ENCODE measurements at regions of chr17 and their contacts with region 1.

Region 1: DNA sequence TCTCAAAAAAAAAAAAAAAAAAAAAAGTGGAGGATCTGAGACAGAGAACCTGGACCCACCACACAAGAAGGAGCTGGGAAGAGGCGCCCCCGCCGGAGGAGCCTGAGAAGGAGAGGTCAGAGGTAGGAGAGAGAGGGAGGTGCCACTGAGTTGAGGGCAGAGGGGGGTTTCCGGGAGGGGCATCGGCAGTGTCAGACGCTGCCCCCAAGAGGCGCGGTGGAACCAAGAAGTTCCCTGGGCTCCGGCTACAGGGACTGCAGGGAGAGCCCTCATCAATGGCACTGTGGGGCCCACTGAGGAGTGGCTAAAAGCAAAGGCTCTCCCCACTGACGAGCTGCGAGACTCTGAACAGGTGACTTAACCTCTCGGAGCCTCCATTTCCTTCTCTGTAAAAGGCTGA is 4.2 kb downstream of the CCDC42 start:
- DNase-seq: peak; percentile 18
- H3K4me3 ChIP-seq: peak overlapping the region in 1 of 4 donors; percentile 19
- H3K27ac ChIP-seq: no peak overlapping the region
- H3K4me1 ChIP-seq: peaks cover 0 to 6% (median 3%) of the 10 kb centered on the region in 4 donors
- H3K27me3 ChIP-seq: no peaks in the 10 kb centered on the region
- CTCF ChIP-seq: no peak
- EP300 ChIP-seq: no peak
- POLR2A ChIP-seq: no peak

Region 2: GRCh38 chr17:8409966-8410864 is 330.3 kb before region 1 on chr17:
- in situ Hi-C with region 1: loop called (anchors 5 to 25 kb)
- intact Hi-C with region 1: loop called (anchors 5 kb)
- DNase-seq: peak; percentile 91
- H3K4me3 ChIP-seq: no peak overlapping the region
- H3K27ac ChIP-seq: no peak overlapping the region
- H3K4me1 ChIP-seq: peaks cover 0 to 7% (median 2%) of the 10 kb centered on the region in 4 donors
- H3K27me3 ChIP-seq: peaks cover under 1% of the 10 kb centered on the region
- CTCF ChIP-seq: peak; percentile 84 to 87 (median 86)
- EP300 ChIP-seq: no peak
- POLR2A ChIP-seq: no peak

Region 3: GRCh38 chr17:8762012-8762411 is 21.5 kb after region 1 on chr17:
- in situ Hi-C with region 1: no loop called
- intact Hi-C with region 1: loop called (anchors 1 kb)
- DNase-seq: no peak
- H3K4me3 ChIP-seq: no peak overlapping the region
- H3K27ac ChIP-seq: no peak overlapping the region
- H3K4me1 ChIP-seq: no peaks in the 10 kb centered on the region
- H3K27me3 ChIP-seq: no peaks in the 10 kb centered on the region
- CTCF ChIP-seq: no peak
- EP300 ChIP-seq: no peak
- POLR2A ChIP-seq: no peak

Measured in transverse colon (tissue), 4 donors.